Activated B cell treated with CpG ODN at 0.5 μM for 24 hours (primary cell): ENCODE measurements at regions of chr9 and their contacts with region 1.

Region 1: DNA sequence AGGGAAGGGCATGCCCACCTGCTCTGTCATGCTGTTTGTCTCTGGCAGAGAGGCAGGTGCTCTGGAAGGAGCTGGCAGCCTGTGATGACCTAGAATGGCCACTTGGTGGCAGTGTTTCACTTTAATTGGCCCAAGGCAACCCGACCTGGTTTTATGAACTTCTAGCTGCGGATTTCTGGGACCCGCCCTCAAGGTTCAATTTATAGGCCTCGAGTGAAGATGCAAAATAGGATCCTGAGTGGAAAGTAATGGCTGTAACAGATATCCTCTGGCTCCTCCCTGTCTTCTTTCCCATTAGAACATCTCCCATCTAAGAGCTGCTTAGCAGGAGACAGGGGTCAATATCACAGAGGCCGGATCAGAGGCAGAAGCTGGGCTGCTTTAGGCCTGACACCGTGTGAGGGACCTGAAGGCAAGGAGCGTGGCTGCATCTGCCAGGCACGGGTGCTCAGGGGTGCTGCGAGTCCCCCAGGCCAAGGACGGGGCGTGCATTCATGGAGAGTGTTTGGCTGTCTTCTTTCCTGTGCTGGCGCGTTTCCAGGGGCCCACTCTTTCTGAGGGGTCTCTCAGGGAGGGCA is 56.7 kb upstream of the SLC28A3 start:
- DNase-seq: peak; percentile 30
- ATAC-seq: peak; percentile 65
- H3K4me3 Mint-ChIP-seq: no peak overlapping the region
- H3K27ac Mint-ChIP-seq: no peak overlapping the region
- H3K4me1 Mint-ChIP-seq: no peaks in the 10 kb centered on the region
- H3K27me3 Mint-ChIP-seq: no peaks in the 10 kb centered on the region
- CTCF ChIP-seq: no peak

Region 2: GRCh38 chr9:85702726-85703289 is 1305.6 kb after region 1 on chr9:
- CTCF ChIA-PET with region 1: no interaction called
- POLR2A ChIA-PET with region 1: no interaction called
- intact Hi-C with region 1: loop called (anchors 10 kb)
- DNase-seq: no peak
- ATAC-seq: no peak
- H3K4me3 Mint-ChIP-seq: no peak overlapping the region
- H3K27ac Mint-ChIP-seq: no peak overlapping the region
- H3K4me1 Mint-ChIP-seq: peaks cover 19% of the 10 kb centered on the region
- H3K27me3 Mint-ChIP-seq: no peaks in the 10 kb centered on the region
- CTCF ChIP-seq: no peak